Activated CD8-positive, alpha-beta memory T cell treated with anti-CD3 and anti-CD28 coated beads, Interleukin-2, amount 10 ng/mL, durations not matched to agents 7 days and 5 days (primary cell): ENCODE measurements at regions of chr2 and their contacts with region 1.

Region 1: GRCh38 chr2:158900345-158900744 is 68.1 kb upstream of the TANC1 start:
- DNase-seq: no peak
- ATAC-seq: no peak
- H3K4me3 Mint-ChIP-seq: no peak overlapping the region
- H3K27ac Mint-ChIP-seq: no peak overlapping the region
- H3K4me1 Mint-ChIP-seq: no peaks in the 10 kb centered on the region
- H3K27me3 Mint-ChIP-seq: peaks cover 9% of the 10 kb centered on the region

Region 2: GRCh38 chr2:158936978-158937377 is 36.6 kb after region 1 on chr2:
- CTCF ChIA-PET with region 1: no interaction called
- DNase-seq: no peak
- ATAC-seq: no peak
- H3K4me3 Mint-ChIP-seq: no peak overlapping the region
- H3K27ac Mint-ChIP-seq: no peak overlapping the region
- H3K4me1 Mint-ChIP-seq: no peaks in the 10 kb centered on the region
- H3K27me3 Mint-ChIP-seq: peaks cover 3% of the 10 kb centered on the region

Region 3: GRCh38 chr2:159118115-159118858 is 217.9 kb after region 1 on chr2:
- CTCF ChIA-PET with region 1: interaction called, 16 read pairs
- DNase-seq: peak; percentile 82
- ATAC-seq: peak; percentile 91
- H3K4me3 Mint-ChIP-seq: no peak overlapping the region
- H3K27ac Mint-ChIP-seq: no peak overlapping the region
- H3K4me1 Mint-ChIP-seq: no peaks in the 10 kb centered on the region
- H3K27me3 Mint-ChIP-seq: peaks cover 12% of the 10 kb centered on the region